CD4-positive, alpha-beta memory T cell (primary cell): ENCODE measurements at regions of chr6 and their contacts with region 1.

Region 1: DNA sequence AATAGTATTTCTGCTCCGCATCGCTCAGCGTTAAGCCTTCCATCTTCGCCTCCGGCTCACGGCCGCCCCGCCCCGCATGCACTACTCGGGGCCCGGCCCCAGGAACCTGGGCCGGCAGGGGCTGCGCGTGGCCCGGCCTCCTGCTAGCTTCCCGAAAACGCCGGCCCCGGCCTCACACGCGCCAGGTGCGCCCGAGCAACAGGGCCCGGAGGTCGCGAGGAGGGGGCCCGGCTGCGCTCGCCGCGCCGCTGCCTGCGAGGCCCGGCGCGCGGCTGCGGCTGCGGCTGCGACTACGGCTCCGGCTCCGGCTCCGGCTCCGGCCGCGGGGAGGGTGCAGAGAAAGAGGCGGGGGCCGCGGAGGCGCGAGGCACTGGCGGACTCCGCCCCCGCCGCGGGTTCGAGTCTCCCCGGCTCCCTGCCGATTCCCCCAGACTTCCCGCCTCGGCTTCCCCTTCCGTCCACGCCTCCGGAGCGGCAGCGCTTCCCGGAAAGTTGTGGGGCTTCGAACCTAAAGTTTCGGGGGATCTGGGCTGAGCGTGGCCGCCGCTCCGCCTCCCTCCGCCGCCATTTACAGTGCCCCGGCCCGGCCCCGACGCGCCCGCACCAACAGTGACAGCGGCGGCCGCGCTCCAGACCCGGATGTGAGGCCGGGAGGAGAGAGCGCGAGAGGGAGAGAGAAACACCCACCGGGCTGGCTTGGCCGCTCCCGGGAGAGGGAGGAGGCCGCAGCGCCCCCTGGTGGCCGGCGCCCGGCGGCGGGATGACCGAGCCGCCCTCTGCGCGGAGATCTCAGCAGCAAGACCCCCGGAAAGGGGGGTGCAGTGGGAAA is at the start of gene REPS1:
- DNase-seq: peak; percentile 88 to 92 (median 89)
- H3K4me3 ChIP-seq: peak within 1 kb of the TSS; percentile 66 to 89
- H3K4me3 Mint-ChIP-seq: peak within 1 kb of the TSS; percentile 87 to 95 (median 92)
- H3K27ac ChIP-seq: peak within 1 kb of the TSS; percentile 74
- H3K27ac Mint-ChIP-seq: peak within 1 kb of the TSS in 6 of 7 donors; percentile 90 to 96 (median 95)
- H3K4me1 ChIP-seq: peaks cover 47% of the 10 kb centered on the region
- H3K4me1 Mint-ChIP-seq: peaks cover 10 to 18% (median 13%) of the 10 kb centered on the region in 4 donors
- H3K27me3 ChIP-seq: no peaks in the 10 kb centered on the region
- H3K27me3 Mint-ChIP-seq: no peaks in the 10 kb centered on the region
- total RNA-seq, gene REPS1: 61.7 to 69.3 TPM

Region 2: GRCh38 chr6:138773177-138774091 is 214.4 kb before region 1 on chr6 and contains the start of gene CCDC28A:
- CTCF ChIA-PET with region 1: no interaction called
- POLR2A ChIA-PET with region 1: interaction called, 3 read pairs
- intact Hi-C with region 1: loop called (anchors 1 kb)
- DNase-seq: peak; percentile 96 to 98 (median 97)
- H3K4me3 ChIP-seq: peak within 1 kb of the TSS; percentile 72 to 99
- H3K4me3 Mint-ChIP-seq: peak within 1 kb of the TSS; percentile 91 to 100 (median 99)
- H3K27ac ChIP-seq: peak within 1 kb of the TSS; percentile 90
- H3K27ac Mint-ChIP-seq: peak within 1 kb of the TSS; percentile 97 to 100 (median 100)
- H3K4me1 ChIP-seq: peaks cover 18% of the 10 kb centered on the region
- H3K4me1 Mint-ChIP-seq: peaks cover 12 to 46% (median 26%) of the 10 kb centered on the region in 4 donors
- H3K27me3 ChIP-seq: no peaks in the 10 kb centered on the region
- H3K27me3 Mint-ChIP-seq: peaks cover 0 to 3% of the 10 kb centered on the region in 2 donors
- total RNA-seq, gene CCDC28A: 32.4 to 33.9 TPM

Region 3: GRCh38 chr6:138869398-138869797 is 118.5 kb before region 1 on chr6:
- CTCF ChIA-PET with region 1: no interaction called
- POLR2A ChIA-PET with region 1: no interaction called
- intact Hi-C with region 1: no loop called
- DNase-seq: no peak
- H3K4me3 ChIP-seq: no peak overlapping the region
- H3K4me3 Mint-ChIP-seq: no peak overlapping the region
- H3K27ac ChIP-seq: no peak overlapping the region
- H3K27ac Mint-ChIP-seq: peak overlapping the region in 1 of 7 donors; percentile 17
- H3K4me1 ChIP-seq: no peaks in the 10 kb centered on the region
- H3K4me1 Mint-ChIP-seq: no peaks in the 10 kb centered on the region
- H3K27me3 ChIP-seq: no peaks in the 10 kb centered on the region
- H3K27me3 Mint-ChIP-seq: peaks cover 6 to 11% of the 10 kb centered on the region in 2 donors

Region 4: GRCh38 chr6:138944412-138944811 is 43.4 kb before region 1 on chr6:
- CTCF ChIA-PET with region 1: no interaction called
- POLR2A ChIA-PET with region 1: no interaction called
- intact Hi-C with region 1: loop called (anchors 2 kb)
- DNase-seq: peak; percentile 33 to 74 (median 50)
- H3K4me3 ChIP-seq: no peak overlapping the region
- H3K4me3 Mint-ChIP-seq: peak overlapping the region in 1 of 8 donors; percentile 20
- H3K27ac ChIP-seq: no peak overlapping the region
- H3K27ac Mint-ChIP-seq: peak overlapping the region in 4 of 7 donors; percentile 40 to 57 (median 49)
- H3K4me1 ChIP-seq: peaks cover 40% of the 10 kb centered on the region
- H3K4me1 Mint-ChIP-seq: peaks cover 28 to 50% (median 38%) of the 10 kb centered on the region in 4 donors
- H3K27me3 ChIP-seq: no peaks in the 10 kb centered on the region
- H3K27me3 Mint-ChIP-seq: peaks cover 0 to 1% of the 10 kb centered on the region in 2 donors

Region 5: GRCh38 chr6:139008117-139008516 is 20.3 kb after region 1 on chr6:
- CTCF ChIA-PET with region 1: interaction called, 16 read pairs
- POLR2A ChIA-PET with region 1: no interaction called
- intact Hi-C with region 1: no loop called
- DNase-seq: no peak
- H3K4me3 ChIP-seq: no peak overlapping the region
- H3K4me3 Mint-ChIP-seq: no peak overlapping the region
- H3K27ac ChIP-seq: no peak overlapping the region
- H3K27ac Mint-ChIP-seq: no peak overlapping the region
- H3K4me1 ChIP-seq: no peaks in the 10 kb centered on the region
- H3K4me1 Mint-ChIP-seq: no peaks in the 10 kb centered on the region
- H3K27me3 ChIP-seq: no peaks in the 10 kb centered on the region
- H3K27me3 Mint-ChIP-seq: no peaks in the 10 kb centered on the region

Region 6: GRCh38 chr6:139080255-139080920 is 92.5 kb after region 1 on chr6:
- CTCF ChIA-PET with region 1: no interaction called
- POLR2A ChIA-PET with region 1: no interaction called
- intact Hi-C with region 1: no loop called
- DNase-seq: no peak
- H3K4me3 ChIP-seq: no peak overlapping the region
- H3K4me3 Mint-ChIP-seq: no peak overlapping the region
- H3K27ac ChIP-seq: no peak overlapping the region
- H3K27ac Mint-ChIP-seq: no peak overlapping the region
- H3K4me1 ChIP-seq: no peaks in the 10 kb centered on the region
- H3K4me1 Mint-ChIP-seq: peaks cover 0 to 10% (median 6%) of the 10 kb centered on the region in 4 donors
- H3K27me3 ChIP-seq: no peaks in the 10 kb centered on the region
- H3K27me3 Mint-ChIP-seq: peaks cover 0 to 1% of the 10 kb centered on the region in 2 donors

Region 7: DNA sequence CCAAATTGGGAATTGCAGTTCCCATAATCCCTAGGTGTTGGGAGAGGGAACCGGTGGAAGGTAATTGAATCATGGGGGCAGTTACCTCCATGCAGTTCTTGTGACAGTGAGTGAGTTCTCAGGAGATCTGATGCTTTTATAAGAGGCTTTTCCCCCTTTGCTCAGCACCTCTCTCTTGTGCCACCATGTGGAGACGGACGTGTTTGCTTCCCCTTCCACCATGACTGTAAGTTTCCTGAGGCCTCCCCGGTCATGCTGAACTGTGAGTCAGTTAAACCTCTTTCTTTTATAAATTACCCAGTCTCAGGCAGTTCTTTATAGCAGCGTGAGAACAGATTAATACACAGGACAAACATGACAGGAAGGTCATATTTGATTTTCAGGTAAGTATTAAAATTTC is 121.7 kb after region 1 on chr6:
- CTCF ChIA-PET with region 1: interaction called, 18 read pairs
- POLR2A ChIA-PET with region 1: interaction called, 12 read pairs
- intact Hi-C with region 1: loop called (anchors 2 kb)
- DNase-seq: peak in 4 of 5 donors; percentile 11 to 30 (median 21)
- H3K4me3 ChIP-seq: no peak overlapping the region
- H3K4me3 Mint-ChIP-seq: peak overlapping the region in 2 of 8 donors; percentile 13 to 39
- H3K27ac ChIP-seq: no peak overlapping the region
- H3K27ac Mint-ChIP-seq: peak overlapping the region; percentile 3 to 87 (median 44)
- H3K4me1 ChIP-seq: peaks cover 50% of the 10 kb centered on the region
- H3K4me1 Mint-ChIP-seq: peaks cover 38 to 59% (median 51%) of the 10 kb centered on the region in 4 donors
- H3K27me3 ChIP-seq: no peaks in the 10 kb centered on the region
- H3K27me3 Mint-ChIP-seq: no peaks in the 10 kb centered on the region

Region 8: DNA sequence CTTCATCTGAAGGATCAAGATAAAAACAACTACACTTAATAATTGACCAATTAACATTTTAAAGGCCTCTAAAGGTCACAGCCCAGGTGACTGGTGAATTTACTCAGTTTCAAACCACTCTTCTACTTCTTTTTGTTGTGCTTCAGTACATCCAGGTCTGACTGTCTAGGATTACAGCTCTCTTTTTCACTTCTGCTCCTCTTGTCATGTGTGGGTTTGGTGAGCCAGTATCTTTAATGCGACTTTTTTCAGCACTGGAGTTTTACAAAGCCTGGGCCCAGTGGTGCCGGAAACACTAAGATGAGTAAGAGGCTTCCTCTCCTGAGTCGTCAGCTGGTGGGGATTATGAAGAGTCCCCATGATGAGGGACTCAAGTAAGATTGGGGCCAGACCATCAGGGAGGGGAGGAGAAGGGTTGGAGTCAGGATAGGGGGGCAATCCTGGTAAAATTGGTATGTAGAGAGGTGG is 174.0 kb after region 1 on chr6:
- CTCF ChIA-PET with region 1: interaction called, 4 read pairs
- POLR2A ChIA-PET with region 1: no interaction called
- intact Hi-C with region 1: loop called (anchors 5 kb)
- DNase-seq: peak; percentile 62 to 87 (median 69)
- H3K4me3 ChIP-seq: peak overlapping the region in 1 of 2 donors; percentile 12
- H3K4me3 Mint-ChIP-seq: peak overlapping the region; percentile 76 to 91 (median 83)
- H3K27ac ChIP-seq: peak overlapping the region; percentile 56
- H3K27ac Mint-ChIP-seq: peak overlapping the region; percentile 86 to 98 (median 95)
- H3K4me1 ChIP-seq: peaks cover 100% of the 10 kb centered on the region
- H3K4me1 Mint-ChIP-seq: peaks cover 73 to 97% (median 85%) of the 10 kb centered on the region in 4 donors
- H3K27me3 ChIP-seq: no peaks in the 10 kb centered on the region
- H3K27me3 Mint-ChIP-seq: no peaks in the 10 kb centered on the region

Region 9: DNA sequence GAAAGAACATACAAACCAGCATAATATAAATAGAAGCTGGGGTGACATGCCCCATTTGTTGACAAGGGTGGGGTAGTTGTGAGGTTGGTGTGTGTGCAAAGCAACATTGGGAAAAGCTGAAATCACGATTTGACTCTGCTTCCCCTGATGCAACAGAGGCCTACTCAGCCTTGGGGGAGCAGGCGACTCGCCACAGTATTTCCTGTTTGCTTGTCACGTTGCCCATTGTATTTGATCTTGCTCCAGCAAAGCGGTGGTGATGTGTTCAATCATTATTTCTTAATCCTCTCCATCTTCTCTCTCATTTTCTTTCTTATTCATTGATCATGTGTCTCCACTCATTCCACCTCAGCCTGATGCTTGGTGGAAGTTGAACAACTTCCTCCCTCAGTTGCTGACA is 552.4 kb after region 1 on chr6:
- CTCF ChIA-PET with region 1: interaction called, 4 read pairs
- POLR2A ChIA-PET with region 1: no interaction called
- intact Hi-C with region 1: loop called (anchors 10 kb)
- DNase-seq: peak; percentile 50 to 69 (median 61)
- H3K4me3 ChIP-seq: no peak overlapping the region
- H3K4me3 Mint-ChIP-seq: peak overlapping the region in 7 of 8 donors; percentile 31 to 82 (median 68)
- H3K27ac ChIP-seq: peak overlapping the region; percentile 46
- H3K27ac Mint-ChIP-seq: peak overlapping the region; percentile 69 to 93 (median 90)
- H3K4me1 ChIP-seq: peaks cover 66% of the 10 kb centered on the region
- H3K4me1 Mint-ChIP-seq: peaks cover 43 to 72% (median 53%) of the 10 kb centered on the region in 4 donors
- H3K27me3 ChIP-seq: no peaks in the 10 kb centered on the region
- H3K27me3 Mint-ChIP-seq: no peaks in the 10 kb centered on the region